PC-9 (cell line): ENCODE measurements at regions of chr1 and their contacts with region 1.

Region 1: DNA sequence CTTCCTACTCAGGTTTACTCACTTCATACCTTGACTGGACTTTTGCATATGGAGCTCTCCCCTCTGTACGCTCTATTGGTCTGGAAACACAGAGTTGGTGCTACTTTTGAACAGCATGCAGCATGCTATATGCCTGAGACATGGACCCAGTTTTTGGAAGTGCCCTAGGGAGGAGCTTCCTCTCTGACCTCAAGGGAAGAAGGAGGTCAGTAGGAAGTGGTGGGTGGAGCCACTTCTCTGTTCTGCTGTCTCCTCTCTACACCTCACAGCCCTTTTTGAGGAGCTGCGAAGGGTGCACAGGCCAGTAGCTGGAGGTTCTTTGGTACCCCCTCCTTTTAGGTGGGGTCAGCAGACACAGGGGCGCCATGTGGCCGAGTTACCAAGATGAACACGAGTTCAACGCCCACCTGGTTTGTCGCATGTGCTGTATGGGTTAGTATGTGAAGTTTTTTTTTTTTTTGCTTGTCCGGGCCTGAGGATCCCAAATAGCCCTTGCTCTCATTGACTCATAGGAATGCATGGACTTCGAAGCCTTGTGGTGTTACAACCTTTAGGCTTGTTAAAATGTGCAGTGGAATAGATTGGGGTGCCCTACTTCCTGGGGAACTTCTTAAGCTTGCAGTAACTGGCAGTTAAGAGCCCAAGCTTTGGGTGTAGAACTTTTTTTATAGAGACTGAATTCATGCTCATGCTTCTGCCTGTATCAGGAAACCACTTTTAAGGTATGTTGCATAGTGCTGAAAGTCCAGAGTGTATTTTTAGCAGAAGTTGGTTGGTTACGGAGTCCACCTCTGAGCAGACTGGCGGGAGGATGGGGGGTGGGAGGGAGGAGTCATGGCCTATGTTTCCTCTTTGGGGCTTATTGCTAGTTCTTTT is 10.7 kb downstream of the MACF1 start:
- DNase-seq: no peak
- H3K4me3 ChIP-seq: no peak overlapping the region
- H3K27ac ChIP-seq: 0 out of 2 replicates have a peak overlapping the region, but pooled peaks have one; percentile 10
- H3K4me1 ChIP-seq: peaks cover 44% of the 10 kb centered on the region
- H3K27me3 ChIP-seq: no peaks in the 10 kb centered on the region
- CTCF ChIP-seq: no peak

Region 2: DNA sequence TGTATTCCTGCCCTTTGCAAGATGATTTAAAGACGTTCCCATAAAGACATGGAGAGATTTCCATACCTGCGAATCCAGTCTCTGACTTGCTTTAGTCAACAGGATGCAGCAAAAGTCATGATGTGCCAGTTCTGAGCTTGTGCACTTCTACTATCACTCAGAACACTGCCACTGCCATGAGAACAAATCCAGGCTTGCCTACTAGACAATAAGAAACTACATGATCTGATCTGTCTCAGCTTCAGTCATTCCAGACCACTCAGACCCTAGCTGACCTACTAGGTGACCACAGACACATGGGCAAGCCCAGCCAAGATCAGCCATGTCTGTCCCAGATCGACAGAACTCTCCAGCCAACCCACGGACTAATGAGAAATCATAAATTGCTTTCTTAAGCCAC is 574.9 kb before region 1 on chr1:
- CTCF ChIA-PET with region 1: no interaction called
- POLR2A ChIA-PET with region 1: no interaction called
- intact Hi-C with region 1: no loop called
- DNase-seq: no peak
- H3K4me3 ChIP-seq: no peak overlapping the region
- H3K27ac ChIP-seq: no peak overlapping the region
- H3K4me1 ChIP-seq: no peaks in the 10 kb centered on the region
- H3K27me3 ChIP-seq: peaks cover 71% of the 10 kb centered on the region
- CTCF ChIP-seq: no peak

Region 3: GRCh38 chr1:38964140-38964548 is 251.1 kb before region 1 on chr1:
- CTCF ChIA-PET with region 1: no interaction called
- POLR2A ChIA-PET with region 1: no interaction called
- intact Hi-C with region 1: no loop called
- DNase-seq: no peak
- H3K4me3 ChIP-seq: no peak overlapping the region
- H3K27ac ChIP-seq: no peak overlapping the region
- H3K4me1 ChIP-seq: peaks cover 42% of the 10 kb centered on the region
- H3K27me3 ChIP-seq: no peaks in the 10 kb centered on the region
- CTCF ChIP-seq: no peak

Region 4: GRCh38 chr1:39204441-39205081 is 10.7 kb before region 1 on chr1 and contains the start of gene MACF1:
- CTCF ChIA-PET with region 1: no interaction called
- POLR2A ChIA-PET with region 1: no interaction called
- intact Hi-C with region 1: loop called (anchors 1 kb)
- DNase-seq: peak in 1 of 2 experiments; percentile 47
- H3K4me3 ChIP-seq: no peak within 1 kb of the TSS
- H3K27ac ChIP-seq: no peak within 1 kb of the TSS
- H3K4me1 ChIP-seq: 0 out of 2 replicates have a peak, but pooled peaks cover 5% of the 10 kb centered on the region
- H3K27me3 ChIP-seq: no peaks in the 10 kb centered on the region
- CTCF ChIP-seq: no peak
- total RNA-seq, gene MACF1: 189 and 199 TPM in 2 replicates

Region 5: GRCh38 chr1:39301606-39302005 is 86.4 kb after region 1 on chr1:
- CTCF ChIA-PET with region 1: no interaction called
- POLR2A ChIA-PET with region 1: interaction called, 20 read pairs
- intact Hi-C with region 1: no loop called
- DNase-seq: no peak
- H3K4me3 ChIP-seq: no peak overlapping the region
- H3K27ac ChIP-seq: no peak overlapping the region
- H3K4me1 ChIP-seq: no peaks in the 10 kb centered on the region
- H3K27me3 ChIP-seq: no peaks in the 10 kb centered on the region
- CTCF ChIP-seq: no peak